ENCODE measurements at regions of chr7 and their contacts with region 1.

Region 1: GRCh38 chr7:140175221-140176121 is 1.3 kb downstream of the KDM7A start:
- DNase-seq: peak; percentile 95

Region 2: DNA sequence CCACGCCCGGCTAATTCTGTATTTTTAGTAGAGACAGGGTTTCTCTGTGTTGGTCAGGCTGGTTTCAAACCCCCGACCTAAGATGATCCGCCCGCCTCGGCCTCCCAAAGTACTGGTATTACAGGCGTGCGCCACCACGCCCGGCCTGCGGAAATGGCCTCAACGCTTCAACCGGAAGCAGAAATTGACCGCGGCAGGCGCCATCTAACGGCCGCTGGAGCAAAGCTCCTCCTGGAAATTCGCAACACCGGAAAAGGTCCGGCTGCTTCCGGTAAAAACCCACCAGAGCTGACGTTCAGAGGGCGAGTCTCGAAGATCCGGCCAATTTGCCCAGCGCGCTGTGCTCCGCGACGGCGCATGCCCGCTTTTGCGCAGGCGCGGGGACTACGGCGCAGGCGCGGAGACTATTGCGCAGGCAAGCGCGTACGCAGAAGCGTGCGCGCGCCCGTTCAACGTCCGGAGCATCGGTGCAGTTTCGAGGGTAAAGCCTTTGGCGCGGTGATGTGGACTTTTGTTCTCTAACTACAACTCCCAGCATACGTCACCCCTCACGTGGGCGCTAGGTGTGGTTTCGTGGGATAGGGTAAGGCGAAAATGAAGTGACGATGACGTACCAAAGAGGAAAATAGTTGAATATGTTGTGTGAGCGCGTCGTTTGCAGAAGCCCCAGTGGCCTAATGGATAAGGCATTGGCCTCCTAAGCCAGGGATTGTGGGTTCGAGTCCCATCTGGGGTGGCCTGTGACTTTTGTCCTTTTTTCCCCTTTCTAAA is 835.2 kb before region 1 on chr7:
- intact Hi-C with region 1: loop called (anchors 5 kb)
- DNase-seq: peak; percentile 98

Region 3: GRCh38 chr7:140062528-140063299 is 112.8 kb before region 1 on chr7 and contains the start of gene PARP12:
- intact Hi-C with region 1: loop called (anchors 5 kb)
- DNase-seq: peak; percentile 97
- total RNA-seq, gene PARP12: 12.5 TPM

Region 4: DNA sequence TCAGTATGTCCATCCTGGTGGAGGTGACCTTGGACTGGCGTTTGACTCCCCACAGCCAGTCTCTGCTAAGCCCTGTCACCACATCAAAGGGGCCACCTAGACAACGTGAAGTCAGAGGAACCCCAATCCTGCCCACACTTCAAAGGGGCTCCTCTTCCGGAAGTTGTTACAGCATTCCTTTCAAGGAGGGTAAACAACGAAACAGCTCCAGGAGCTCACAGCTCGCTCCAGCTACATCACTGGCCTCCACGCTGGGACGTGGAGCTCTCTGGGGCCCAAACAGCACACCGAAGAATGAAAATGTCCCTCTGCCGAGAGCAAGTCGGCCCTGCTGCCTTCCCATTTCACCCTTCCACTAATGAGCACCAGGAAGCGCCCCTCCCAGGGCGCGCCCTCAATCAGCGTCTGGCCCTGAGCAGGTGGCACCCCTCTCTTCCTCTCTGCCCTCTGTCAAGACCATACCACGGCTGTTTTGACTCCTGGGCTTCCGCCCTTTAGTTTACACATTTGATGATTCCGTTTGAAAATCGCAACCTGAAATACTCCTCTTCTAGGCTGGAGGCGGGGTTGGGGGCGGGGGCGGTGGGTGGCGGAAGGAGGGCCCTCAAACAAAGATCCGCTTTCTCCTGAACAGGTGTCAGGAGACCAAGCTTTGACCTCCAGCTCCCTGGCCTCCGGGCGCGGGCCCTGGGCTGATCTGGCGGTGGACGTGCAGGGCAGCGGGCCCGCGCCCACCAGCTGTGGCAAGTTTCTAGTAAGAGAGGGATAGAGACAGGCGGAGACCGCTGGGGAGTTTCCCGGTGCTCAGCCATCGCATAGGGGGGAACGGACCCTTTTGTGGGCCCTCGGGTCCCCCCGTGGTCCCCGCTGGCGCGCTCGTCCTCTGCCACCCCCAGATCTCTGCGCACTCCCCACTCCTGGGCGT is 54.4 kb after region 1 on chr7:
- intact Hi-C with region 1: loop called (anchors 5 kb)
- DNase-seq: no peak

Region 5: GRCh38 chr7:140326116-140326928 is 150.9 kb after region 1 on chr7:
- intact Hi-C with region 1: loop called (anchors 5 kb)
- DNase-seq: peak; percentile 83